Caco-2 (cell line): ENCODE measurements at regions of chr7 and their contacts with region 1.

Region 1: DNA sequence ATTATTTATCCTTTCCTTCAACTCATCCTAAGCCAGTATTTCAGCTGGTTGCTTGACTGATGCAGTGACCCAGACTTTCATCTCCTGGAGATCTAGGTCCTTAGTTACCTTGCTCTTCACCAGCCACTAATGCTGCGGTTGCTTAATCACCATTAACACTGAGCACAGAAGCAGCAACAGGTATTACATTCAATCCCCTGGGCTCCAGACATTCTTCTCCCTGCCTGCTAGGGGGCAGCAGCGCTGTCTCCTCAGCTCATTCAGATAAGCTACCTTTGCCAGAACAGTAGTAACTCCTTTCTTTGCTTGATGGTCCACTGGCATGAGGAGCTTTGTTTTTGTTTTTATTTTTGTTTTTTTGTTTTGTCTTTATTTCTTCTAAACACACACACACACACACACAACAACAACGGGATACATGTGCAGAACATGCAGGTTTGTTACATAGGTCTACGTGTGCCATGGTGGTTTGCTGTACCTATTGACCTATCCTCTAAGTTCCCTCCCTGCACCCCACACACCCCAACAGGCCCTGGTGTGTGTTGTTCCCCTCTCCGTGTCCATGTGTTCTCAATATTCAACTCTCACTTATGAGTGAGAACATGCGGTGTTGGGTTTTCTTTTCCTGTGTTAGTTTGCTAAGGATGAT is 1043.2 kb upstream of the C7orf33 start:
- DNase-seq: peak; percentile 37 to 56
- H3K4me3 ChIP-seq: no peak overlapping the region
- H3K4me3 Mint-ChIP-seq: no peak overlapping the region
- H3K27ac Mint-ChIP-seq: no peak overlapping the region
- H3K4me1 ChIP-seq: no peaks in the 10 kb centered on the region
- H3K4me1 Mint-ChIP-seq: no peaks in the 10 kb centered on the region
- H3K27me3 ChIP-seq: no peaks in the 10 kb centered on the region
- H3K27me3 Mint-ChIP-seq: no peaks in the 10 kb centered on the region
- CTCF ChIP-seq: peak; percentile 46 to 47

Region 2: DNA sequence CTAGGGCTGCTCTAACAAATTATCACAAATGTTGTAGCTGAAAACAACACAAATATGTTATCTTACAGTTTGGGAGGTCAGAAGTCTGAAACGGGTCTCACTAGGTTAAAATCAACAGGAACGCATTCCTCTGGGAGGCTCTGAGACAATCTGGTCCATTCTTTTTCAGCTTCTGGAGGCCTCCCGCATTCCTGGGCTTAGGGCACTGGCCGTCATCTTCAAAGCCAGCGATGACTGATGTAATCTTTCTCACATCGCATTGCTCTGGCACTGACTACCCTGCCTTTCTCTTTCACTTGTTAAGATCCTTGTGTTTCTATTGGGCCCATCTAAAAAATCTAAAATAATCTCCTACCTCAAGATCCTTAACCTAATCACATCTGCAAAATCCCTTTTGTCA is 28.3 kb before region 1 on chr7:
- CTCF ChIA-PET with region 1: no interaction called
- POLR2A ChIA-PET with region 1: no interaction called
- intact Hi-C with region 1: loop called (anchors 2 kb)
- DNase-seq: peak; percentile 78 to 82
- H3K4me3 ChIP-seq: no peak overlapping the region
- H3K4me3 Mint-ChIP-seq: peak overlapping the region; percentile 34
- H3K27ac Mint-ChIP-seq: peak overlapping the region; percentile 90
- H3K4me1 ChIP-seq: peaks cover 24% of the 10 kb centered on the region
- H3K4me1 Mint-ChIP-seq: peaks cover 7% of the 10 kb centered on the region
- H3K27me3 ChIP-seq: no peaks in the 10 kb centered on the region
- H3K27me3 Mint-ChIP-seq: no peaks in the 10 kb centered on the region
- CTCF ChIP-seq: no peak